ENCODE measurements at regions of chr1 and their contacts with region 1.

Region 1: GRCh38 chr1:209884665-209885117 is 53.3 kb upstream of the SYT14 start:
- DNase-seq: peak; percentile 66
- H3K4me3 Mint-ChIP-seq: no peak overlapping the region
- H3K27ac Mint-ChIP-seq: no peak overlapping the region
- H3K4me1 Mint-ChIP-seq: peaks cover 6% of the 10 kb centered on the region
- H3K27me3 Mint-ChIP-seq: peaks cover 29% of the 10 kb centered on the region

Region 2: DNA sequence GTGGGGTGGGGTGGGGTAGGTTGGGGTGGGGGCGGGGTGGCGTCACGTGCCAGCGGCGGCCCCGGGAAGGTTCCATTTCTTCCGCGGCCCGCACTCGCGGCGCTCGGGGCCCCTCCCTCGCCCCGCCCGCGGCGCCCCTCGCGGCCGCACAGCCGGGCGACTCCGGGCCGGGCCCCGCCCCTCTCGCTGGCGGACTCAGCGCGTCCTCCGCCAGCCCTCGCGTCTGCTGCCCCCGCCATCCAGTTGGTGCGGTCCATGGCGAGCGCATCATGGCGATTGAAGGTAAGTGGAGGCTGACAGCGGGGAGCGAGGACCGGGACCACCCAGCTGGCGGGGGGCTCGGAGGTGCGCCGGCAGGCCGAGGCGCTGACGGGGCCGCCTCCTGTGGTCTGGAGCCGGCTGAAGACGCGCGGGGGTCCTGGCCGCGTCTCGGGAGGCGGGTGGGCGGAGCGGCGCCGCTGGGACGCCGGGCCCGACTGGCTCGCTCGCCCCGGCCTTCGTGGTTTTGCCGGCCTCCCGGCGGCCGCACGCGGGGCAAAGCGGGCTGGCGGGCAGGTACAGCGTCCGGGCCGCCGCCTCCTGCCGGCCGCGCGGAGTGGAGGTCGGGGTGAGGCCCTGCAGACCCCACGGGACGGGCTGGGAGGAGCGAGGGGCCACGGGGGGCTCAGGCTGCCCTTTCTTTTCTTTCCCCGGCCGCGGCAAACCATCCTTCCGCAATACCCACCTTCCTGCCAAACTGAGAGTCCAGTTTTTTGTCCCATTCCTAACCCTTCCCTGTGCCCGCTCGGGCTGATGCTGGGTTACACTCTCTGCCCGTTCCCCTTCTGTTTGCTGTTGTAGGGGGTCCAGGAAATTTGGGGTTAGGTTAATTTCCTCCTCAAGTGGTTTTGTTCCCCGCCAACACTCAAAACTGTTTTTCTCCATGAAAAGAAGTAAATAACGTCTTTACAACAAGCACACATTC is 53.6 kb after region 1 on chr1 and contains the start of gene SYT14:
- intact Hi-C with region 1: loop called (anchors 10 kb)
- DNase-seq: peak; percentile 57
- H3K4me3 Mint-ChIP-seq: peak within 1 kb of the TSS; percentile 64
- H3K27ac Mint-ChIP-seq: peak within 1 kb of the TSS; percentile 14
- H3K4me1 Mint-ChIP-seq: peaks cover 8% of the 10 kb centered on the region
- H3K27me3 Mint-ChIP-seq: peaks cover 68% of the 10 kb centered on the region
- total RNA-seq, gene SYT14: not detected in 2 replicates

Measured in activated CD4-positive, alpha-beta T cell treated with anti-CD3 and anti-CD28 coated beads, Interleukin-2, amount 10 ng/mL, durations not matched to agents 24 days and 14 days (primary cell).